ENCODE measurements at regions of chr20 and their contacts with region 1.

Region 1: GRCh38 chr20:19735446-19735845 is 22.6 kb upstream of the RIN2 start:
- DNase-seq: peak; percentile 83

Region 2: DNA sequence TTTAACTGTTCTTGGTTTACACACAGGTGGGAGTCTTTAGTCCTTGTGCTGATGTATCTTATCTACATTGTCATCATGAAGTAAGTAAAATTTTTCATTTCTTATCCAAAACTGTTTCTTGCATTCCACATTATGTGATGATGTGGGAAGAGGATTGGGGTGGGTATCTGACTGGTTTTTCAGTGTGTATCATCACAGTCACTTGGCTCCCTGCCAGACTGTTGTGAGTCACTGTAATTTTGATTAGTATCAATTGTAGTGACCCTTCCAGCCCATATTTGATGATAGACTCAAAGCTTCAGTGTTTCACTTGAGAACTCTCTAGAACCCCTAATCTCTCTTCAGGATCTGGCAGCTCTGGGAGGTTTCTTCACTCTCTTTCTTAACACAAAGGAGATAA is 61.9 kb before region 1 on chr20:
- intact Hi-C with region 1: no loop called
- DNase-seq: no peak

Region 3: GRCh38 chr20:19757487-19758132 is 22.2 kb after region 1 on chr20:
- intact Hi-C with region 1: loop called (anchors 2 kb)
- DNase-seq: peak; percentile 94

Measured in cardiac septum (tissue), 1 donor.